Psoas muscle (tissue), 8 donors: ENCODE measurements at regions of chr7 and their contacts with region 1.

Region 1: DNA sequence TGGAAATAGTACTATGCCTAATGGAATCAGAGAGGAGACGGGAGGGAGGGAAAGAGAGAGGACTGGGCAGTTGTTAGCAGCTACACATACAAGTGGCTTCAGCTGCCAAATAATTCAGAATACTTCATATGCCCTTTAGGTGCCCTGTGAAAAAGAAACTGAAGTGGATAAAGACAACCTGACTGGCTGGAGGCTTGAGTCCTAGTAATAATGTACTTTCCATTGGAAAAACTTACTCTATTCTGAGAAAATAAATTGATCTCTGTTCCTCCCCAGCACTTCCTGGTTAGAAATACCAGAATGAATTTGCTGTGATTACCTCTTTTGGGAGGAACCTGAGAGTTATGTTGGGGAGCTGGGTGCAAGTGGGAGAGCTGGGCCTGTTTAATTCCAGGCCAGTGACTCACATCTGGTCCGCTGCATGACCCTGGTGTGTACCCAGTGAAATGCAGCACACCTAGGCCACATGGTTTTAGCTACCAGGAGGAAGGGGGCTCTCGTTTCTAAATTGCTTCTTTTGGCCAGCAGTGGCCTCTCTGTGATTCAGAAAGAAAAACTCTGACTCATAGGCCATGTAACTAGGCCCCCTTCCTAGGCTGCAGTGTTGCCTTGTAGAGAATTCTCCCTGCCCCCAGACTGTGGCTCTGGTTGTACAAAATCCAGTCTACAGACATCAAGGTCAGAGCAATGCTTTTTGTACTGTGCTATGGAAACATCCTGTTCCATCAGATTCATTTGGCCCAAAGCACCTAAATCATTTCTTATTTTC is 6.5 kb downstream of the AGFG2 start:
- DNase-seq: no peak
- ATAC-seq: peak; percentile 57 to 84 (median 81)
- H3K4me3 ChIP-seq: no peak overlapping the region
- H3K27ac ChIP-seq: peak overlapping the region; percentile 71
- H3K4me1 ChIP-seq: peaks cover 26% of the 10 kb centered on the region
- H3K27me3 ChIP-seq: no peaks in the 10 kb centered on the region
- CTCF ChIP-seq: no peak

Region 2: DNA sequence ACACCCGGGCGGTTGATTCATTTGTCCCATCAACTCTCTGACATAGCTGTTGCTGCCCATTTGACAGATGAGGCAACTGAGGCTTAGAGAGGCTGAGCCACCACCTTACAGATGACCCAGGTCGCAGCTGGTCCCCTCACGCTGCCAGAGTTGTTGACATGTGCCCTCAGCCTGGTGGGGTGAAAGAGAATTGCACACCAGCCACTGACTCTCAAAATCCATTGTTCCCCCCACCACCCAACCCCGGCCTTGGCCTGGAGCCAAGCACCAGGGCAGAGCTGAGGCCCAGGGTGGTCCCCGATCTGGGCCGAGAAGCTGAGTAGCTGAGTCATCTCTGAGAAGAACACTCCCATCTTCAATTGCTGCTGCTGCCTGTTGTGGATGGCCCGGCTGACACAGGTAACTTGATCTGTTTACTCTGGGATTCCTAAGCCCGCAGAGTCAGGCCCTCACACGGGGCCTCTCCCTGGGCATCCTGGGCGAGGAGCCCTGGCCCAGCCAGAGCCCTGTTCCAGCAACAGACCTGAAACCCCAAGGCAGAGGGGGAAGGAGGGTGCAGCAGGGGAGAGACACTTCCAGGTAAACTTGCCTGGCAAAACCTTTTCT is 298.3 kb before region 1 on chr7:
- intact Hi-C with region 1: no loop called
- DNase-seq: peak; percentile 60 to 88
- ATAC-seq: peak; percentile 70 to 75 (median 72)
- H3K4me3 ChIP-seq: peak overlapping the region; percentile 2
- H3K27ac ChIP-seq: peak overlapping the region; percentile 96
- H3K4me1 ChIP-seq: peaks cover 50% of the 10 kb centered on the region
- H3K27me3 ChIP-seq: no peaks in the 10 kb centered on the region
- CTCF ChIP-seq: peak; percentile 20

Region 3: GRCh38 chr7:100478966-100479665 is 66.4 kb before region 1 on chr7 and contains the start of gene TSC22D4:
- intact Hi-C with region 1: loop called (anchors 5 kb)
- DNase-seq: peak; percentile 94 to 98
- ATAC-seq: peak; percentile 92 to 96 (median 95)
- H3K4me3 ChIP-seq: peak within 1 kb of the TSS; percentile 98
- H3K27ac ChIP-seq: peak within 1 kb of the TSS; percentile 79
- H3K4me1 ChIP-seq: peaks cover 20% of the 10 kb centered on the region
- H3K27me3 ChIP-seq: no peaks in the 10 kb centered on the region
- CTCF ChIP-seq: no peak
- total RNA-seq, gene TSC22D4: 15.7 to 23.6 (median 17.6) TPM

Region 4: DNA sequence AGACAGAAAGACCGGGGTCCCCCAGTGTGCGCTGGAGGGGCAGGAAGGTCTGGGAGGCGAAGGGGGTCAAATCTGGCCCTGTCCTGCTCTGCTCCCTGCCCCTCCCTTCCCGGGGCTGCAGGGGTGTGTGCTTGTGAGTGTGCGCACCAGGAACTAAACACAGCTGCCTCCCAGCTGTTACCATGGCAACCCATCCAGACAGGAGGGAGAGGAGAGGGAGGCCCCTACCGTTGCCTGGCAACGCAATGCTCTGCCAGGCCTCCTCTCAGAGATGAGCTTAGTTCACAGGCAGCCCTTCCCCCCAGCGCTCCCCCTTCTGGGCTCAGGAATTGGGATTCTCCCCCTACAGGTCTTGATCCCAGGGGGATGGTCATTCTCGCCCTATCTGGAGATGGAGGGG is 55.7 kb before region 1 on chr7:
- intact Hi-C with region 1: no loop called
- DNase-seq: peak in 1 of 2 donors; percentile 54
- ATAC-seq: no peak
- H3K4me3 ChIP-seq: no peak overlapping the region
- H3K27ac ChIP-seq: no peak overlapping the region
- H3K4me1 ChIP-seq: peaks cover 3% of the 10 kb centered on the region
- H3K27me3 ChIP-seq: peaks cover 0 to 21% (median 7%) of the 10 kb centered on the region in 3 donors
- CTCF ChIP-seq: no peak

Region 5: DNA sequence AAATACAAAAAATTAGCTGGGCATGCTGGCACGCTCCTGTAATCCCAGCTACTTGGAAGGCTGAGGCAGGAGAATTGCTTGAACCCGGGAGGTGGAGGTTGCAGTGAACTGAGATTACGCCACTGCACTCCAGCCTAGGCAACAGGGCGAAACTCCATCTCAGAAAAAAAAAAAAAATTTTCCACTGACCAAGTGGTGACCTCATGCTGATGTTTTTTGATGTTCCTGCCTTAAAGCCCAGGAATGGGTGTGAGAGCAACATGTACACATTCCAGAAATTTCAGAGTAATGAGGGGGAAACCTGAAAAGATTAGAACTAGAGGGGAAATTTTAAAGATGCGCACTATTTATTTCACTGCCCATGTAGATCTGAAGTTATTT is 42.2 kb before region 1 on chr7:
- intact Hi-C with region 1: no loop called
- DNase-seq: no peak
- ATAC-seq: no peak
- H3K4me3 ChIP-seq: no peak overlapping the region
- H3K27ac ChIP-seq: no peak overlapping the region
- H3K4me1 ChIP-seq: no peaks in the 10 kb centered on the region
- H3K27me3 ChIP-seq: peaks cover 0 to 2% (median 0%) of the 10 kb centered on the region in 3 donors
- CTCF ChIP-seq: no peak

Region 6: GRCh38 chr7:100515072-100515532 is 30.4 kb before region 1 on chr7:
- intact Hi-C with region 1: loop called in 1 of 2 experiments (anchors 2 kb)
- DNase-seq: no peak
- ATAC-seq: peak in 1 of 4 donors; percentile 51
- H3K4me3 ChIP-seq: no peak overlapping the region
- H3K27ac ChIP-seq: no peak overlapping the region
- H3K4me1 ChIP-seq: no peaks in the 10 kb centered on the region
- H3K27me3 ChIP-seq: no peaks in the 10 kb centered on the region
- CTCF ChIP-seq: no peak

Region 7: DNA sequence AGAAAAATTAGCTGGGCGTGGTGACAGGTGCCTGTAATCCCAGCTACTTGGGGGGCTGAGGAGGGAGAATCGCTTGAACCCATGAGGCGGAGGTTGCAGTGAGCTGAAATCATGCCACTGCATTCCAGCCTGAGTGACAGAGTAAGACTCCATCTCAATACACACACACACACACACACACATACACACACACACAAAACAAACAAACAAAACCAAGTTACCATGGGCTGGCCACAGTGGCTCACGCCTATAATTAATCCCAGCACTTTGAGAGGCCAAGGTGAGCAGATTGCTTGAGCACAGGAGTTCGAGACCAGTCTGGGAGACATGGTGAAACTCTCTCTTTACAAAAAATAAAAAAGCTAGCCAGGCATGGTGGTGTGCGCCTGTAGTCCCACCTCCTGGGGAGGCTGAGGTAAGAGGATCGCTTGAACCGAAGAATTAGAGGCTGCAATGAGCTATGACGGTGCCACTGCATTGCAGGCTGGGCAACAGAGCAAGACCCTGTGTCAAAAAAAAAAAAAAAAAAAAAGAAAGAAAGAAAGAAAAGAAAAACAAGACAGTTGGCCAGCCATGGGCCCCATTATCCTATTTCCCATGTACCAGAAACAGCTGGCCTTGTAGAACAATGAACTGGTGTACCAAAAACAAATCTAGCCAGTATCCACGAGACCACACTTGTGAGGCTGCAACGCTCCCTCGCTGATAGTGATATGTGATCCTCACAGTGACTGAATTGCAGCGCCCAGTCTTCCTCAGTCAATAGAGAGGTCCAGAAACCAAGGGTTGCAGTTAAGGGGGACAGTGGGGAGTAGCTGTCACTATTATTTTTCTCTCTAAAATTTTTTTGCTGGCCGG is 13.2 kb before region 1 on chr7:
- intact Hi-C with region 1: loop called in 1 of 2 experiments (anchors 2 kb)
- DNase-seq: no peak
- ATAC-seq: no peak
- H3K4me3 ChIP-seq: no peak overlapping the region
- H3K27ac ChIP-seq: no peak overlapping the region
- H3K4me1 ChIP-seq: no peaks in the 10 kb centered on the region
- H3K27me3 ChIP-seq: peaks cover 0 to 11% (median 0%) of the 10 kb centered on the region in 3 donors
- CTCF ChIP-seq: no peak